Naive thymus-derived CD4-positive, alpha-beta T cell (primary cell): ENCODE measurements at regions of chr12 and their contacts with region 1.

Region 1: DNA sequence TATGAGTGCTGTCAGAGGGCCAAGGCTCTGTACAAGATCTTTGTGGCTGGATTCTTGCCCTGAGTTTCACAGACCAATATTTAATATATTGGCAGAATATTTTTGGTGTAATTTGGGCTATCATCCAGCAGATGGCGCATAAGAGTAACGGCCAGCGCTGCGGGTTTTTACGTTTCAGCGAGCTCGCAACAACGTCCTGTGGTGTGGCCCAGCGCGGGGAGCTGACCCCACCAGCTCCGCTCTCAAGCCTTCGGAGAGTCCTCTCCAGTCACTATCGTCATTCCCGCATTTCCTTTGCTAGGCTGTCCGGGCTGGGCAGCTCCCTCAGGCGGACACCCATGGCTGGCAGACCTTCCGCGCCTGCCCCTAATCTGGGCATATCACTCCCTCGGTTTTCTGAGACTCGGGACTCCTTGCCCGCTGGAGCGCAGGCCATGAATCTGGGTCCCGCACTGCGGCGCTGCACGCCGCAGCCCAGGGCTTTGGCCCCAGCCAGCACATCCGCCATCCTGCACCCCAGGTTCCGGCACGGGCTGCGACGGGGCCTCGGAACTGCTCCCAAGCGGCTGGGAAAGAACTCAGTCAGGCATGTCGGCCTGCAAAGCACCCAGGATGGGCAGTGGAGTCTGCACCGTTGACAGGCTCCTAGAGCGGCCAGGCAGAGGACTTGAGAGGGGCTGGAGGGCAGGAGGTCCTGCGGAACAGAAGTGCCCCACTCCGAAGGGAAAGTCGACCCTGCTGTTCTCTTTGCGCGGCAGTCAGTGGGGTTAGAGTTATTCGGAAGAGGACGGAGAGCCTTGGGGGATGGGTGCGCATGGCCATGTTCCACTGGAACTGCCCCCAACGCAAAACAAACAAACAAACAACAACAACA is 18.4 kb downstream of the OLR1 start:
- DNase-seq: peak; percentile 31 to 71 (median 58)
- ATAC-seq: peak; percentile 93
- H3K4me3 ChIP-seq: peak overlapping the region; percentile 83
- H3K4me3 Mint-ChIP-seq: peak overlapping the region; percentile 89 to 96 (median 93)
- H3K27ac ChIP-seq: peak overlapping the region; percentile 55
- H3K27ac Mint-ChIP-seq: peak overlapping the region in 7 of 9 donors; percentile 58 to 91 (median 82)
- H3K4me1 ChIP-seq: peaks cover 6 to 7% of the 10 kb centered on the region in 2 donors
- H3K4me1 Mint-ChIP-seq: peaks cover 5 to 15% (median 11%) of the 10 kb centered on the region in 7 donors
- H3K27me3 ChIP-seq: peaks cover 0 to 3% of the 10 kb centered on the region in 2 donors
- H3K27me3 Mint-ChIP-seq: peaks cover 0 to 66% (median 0%) of the 10 kb centered on the region in 5 donors

Region 2: GRCh38 chr12:10190558-10191388 is 37.3 kb after region 1 on chr12:
- CTCF ChIA-PET with region 1: interaction called, 39 read pairs
- POLR2A ChIA-PET with region 1: interaction called, 6 read pairs
- intact Hi-C with region 1: loop called (anchors 1 kb)
- DNase-seq: peak; percentile 21 to 65 (median 48)
- ATAC-seq: peak; percentile 97
- H3K4me3 ChIP-seq: no peak overlapping the region
- H3K4me3 Mint-ChIP-seq: no peak overlapping the region
- H3K27ac ChIP-seq: no peak overlapping the region
- H3K27ac Mint-ChIP-seq: no peak overlapping the region
- H3K4me1 ChIP-seq: no peaks in the 10 kb centered on the region
- H3K4me1 Mint-ChIP-seq: peaks cover 0 to 8% (median 0%) of the 10 kb centered on the region in 7 donors
- H3K27me3 ChIP-seq: no peaks in the 10 kb centered on the region
- H3K27me3 Mint-ChIP-seq: peaks cover 8 to 32% (median 13%) of the 10 kb centered on the region in 5 donors